Heart right ventricle (tissue), 16 donors: ENCODE measurements at regions of chr6 and their contacts with region 1.

Region 1: DNA sequence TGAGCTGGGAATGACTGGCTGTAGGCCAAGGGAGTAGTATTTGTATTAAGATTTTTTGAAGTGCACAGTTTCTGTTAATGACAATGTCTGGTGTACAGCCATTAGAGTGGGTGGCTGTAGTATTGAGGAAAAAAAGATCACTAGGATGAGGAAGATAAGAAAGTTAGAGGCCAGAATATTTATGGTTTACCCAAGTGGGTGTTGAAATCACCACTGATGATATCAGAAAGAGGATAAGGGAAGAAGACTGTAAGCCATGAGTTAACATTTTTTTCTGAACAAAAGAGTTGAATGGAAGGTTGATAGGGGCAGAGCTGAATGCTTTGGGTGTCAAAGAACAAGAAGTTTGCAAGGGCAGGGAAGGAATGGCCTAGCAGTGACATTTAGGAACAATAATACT is 104.7 kb downstream of the PRDM13 start:
- DNase-seq: no peak
- ATAC-seq: no peak
- H3K4me3 ChIP-seq: no peak overlapping the region
- H3K27ac ChIP-seq: no peak overlapping the region
- H3K4me1 ChIP-seq: no peaks in the 10 kb centered on the region
- H3K27me3 ChIP-seq: peaks cover 0 to 5% (median 0%) of the 10 kb centered on the region in 7 donors
- CTCF ChIP-seq: no peak

Region 2: DNA sequence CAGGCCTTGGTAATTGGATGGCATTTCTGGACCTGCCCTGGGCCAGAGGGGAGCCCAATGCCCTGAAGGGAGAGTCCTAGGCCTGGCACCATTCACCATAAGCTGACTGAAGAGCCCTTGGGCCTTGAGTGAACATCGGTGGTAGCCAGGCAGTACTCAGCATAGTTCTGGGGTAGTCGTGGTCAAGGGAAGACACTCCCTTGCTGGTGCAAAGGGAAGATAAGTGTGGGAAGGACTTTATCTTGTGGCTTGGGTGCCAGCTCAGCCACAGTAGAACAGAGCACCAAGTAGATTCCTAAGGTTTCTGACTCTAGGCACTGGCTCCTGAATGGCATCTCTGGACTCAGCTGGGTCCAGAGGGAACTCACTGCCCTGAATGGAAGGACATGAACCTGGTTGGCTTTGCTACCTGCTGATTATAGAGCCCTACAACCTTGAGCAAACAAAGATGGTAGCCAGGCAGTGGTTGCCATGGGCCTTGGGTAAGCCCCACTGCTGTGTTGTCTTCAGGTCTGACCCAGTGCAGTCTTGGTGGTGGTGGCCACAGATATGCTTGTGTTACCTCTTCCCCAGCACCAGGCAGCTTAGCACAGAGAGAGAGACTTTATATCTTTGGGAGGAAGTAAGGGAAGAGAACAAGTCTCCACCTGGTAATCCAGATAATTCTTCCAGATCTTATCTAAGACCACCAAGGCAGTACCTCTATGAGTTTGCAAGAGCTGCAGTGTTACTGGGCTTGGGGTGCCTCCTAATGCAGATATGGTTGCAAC is 21.2 kb before region 1 on chr6:
- intact Hi-C with region 1: no loop called
- DNase-seq: no peak
- ATAC-seq: no peak
- H3K4me3 ChIP-seq: no peak overlapping the region
- H3K27ac ChIP-seq: no peak overlapping the region
- H3K4me1 ChIP-seq: no peaks in the 10 kb centered on the region
- H3K27me3 ChIP-seq: peaks cover 0 to 14% (median 0%) of the 10 kb centered on the region in 7 donors
- CTCF ChIP-seq: no peak

Region 3: GRCh38 chr6:99779631-99780555 is 68.6 kb after region 1 on chr6:
- intact Hi-C with region 1: loop called in 1 of 10 experiments (anchors 2 kb)
- DNase-seq: no peak
- ATAC-seq: no peak
- H3K4me3 ChIP-seq: no peak overlapping the region
- H3K27ac ChIP-seq: no peak overlapping the region
- H3K4me1 ChIP-seq: no peaks in the 10 kb centered on the region
- H3K27me3 ChIP-seq: peaks cover 0 to 16% (median 5%) of the 10 kb centered on the region in 7 donors
- CTCF ChIP-seq: no peak